Esophagus squamous epithelium (tissue), 5 donors: ENCODE measurements at regions of chr1 and their contacts with region 1.

Region 1: GRCh38 chr1:108643492-108644335 is 17.2 kb downstream of the HENMT1 start:
- DNase-seq: no peak
- H3K4me3 ChIP-seq: no peak overlapping the region
- H3K27ac ChIP-seq: no peak overlapping the region
- H3K4me1 ChIP-seq: peaks cover 7 to 24% (median 11%) of the 10 kb centered on the region in 3 donors
- H3K27me3 ChIP-seq: no peaks in the 10 kb centered on the region
- CTCF ChIP-seq: peak; percentile 21 to 74 (median 58)
- POLR2A ChIP-seq: no peak

Region 2: GRCh38 chr1:108512239-108512981 is 131.3 kb before region 1 on chr1:
- intact Hi-C with region 1: loop called (anchors 5 kb)
- DNase-seq: no peak
- H3K4me3 ChIP-seq: no peak overlapping the region
- H3K27ac ChIP-seq: no peak overlapping the region
- H3K4me1 ChIP-seq: peaks cover 0 to 12% (median 0%) of the 10 kb centered on the region in 3 donors
- H3K27me3 ChIP-seq: peaks cover 0 to 4% (median 0%) of the 10 kb centered on the region in 4 donors
- CTCF ChIP-seq: peak; percentile 48 to 87 (median 78)
- POLR2A ChIP-seq: no peak

Region 3: DNA sequence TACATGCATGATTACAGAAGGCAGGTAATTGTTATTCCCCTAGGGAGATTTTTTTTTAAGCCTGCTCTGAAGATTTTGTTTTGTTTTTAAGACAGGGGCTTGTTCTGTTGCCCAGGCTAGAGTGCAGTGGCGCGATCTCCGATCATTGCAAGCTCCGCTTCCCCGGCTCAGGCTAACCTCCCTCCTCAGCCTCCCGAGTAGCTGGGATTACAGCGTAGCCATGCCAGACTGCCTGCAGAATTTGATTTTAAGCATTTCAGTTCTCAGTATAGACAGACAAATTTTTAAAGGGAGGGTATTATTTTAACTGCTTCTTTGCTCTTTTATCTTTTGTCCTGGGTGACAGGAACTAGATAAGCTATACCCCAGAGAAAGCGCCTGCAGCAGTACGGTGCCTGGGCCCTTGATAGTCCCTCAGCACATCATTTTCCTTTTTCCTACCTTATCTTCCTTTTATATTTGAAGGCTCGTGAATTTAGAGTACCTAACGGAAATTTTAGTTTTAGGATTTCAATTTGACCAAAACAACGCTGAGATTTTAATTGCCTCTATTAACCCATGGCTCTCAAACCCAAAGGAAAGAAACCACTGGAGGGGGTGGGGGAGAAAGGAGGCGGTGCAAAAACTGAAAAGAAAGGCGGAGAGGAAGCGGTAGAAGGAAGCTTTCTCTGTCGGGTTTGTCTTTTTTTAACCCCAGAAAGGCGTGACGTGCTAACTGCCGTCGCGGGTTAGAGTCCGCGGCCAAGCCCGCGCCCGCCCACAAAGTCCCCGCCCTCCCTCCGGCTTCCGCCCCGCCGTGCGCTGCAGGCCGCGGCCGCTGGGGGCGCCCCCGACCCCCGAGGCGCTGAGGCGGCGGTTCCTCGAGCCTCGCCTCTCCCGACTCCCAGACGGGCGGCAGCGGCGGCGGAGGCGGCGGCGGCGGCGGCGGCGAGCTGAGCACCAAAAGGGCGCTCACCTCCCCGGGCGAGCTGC is 84.2 kb before region 1 on chr1 and contains the start of gene EEIG2:
- intact Hi-C with region 1: loop called (anchors 10 kb)
- DNase-seq: peak; percentile 14
- H3K4me3 ChIP-seq: peak within 1 kb of the TSS; percentile 50 to 81 (median 63)
- H3K27ac ChIP-seq: peak within 1 kb of the TSS; percentile 74 to 82 (median 80)
- H3K4me1 ChIP-seq: peaks cover 17 to 36% (median 23%) of the 10 kb centered on the region in 3 donors
- H3K27me3 ChIP-seq: peaks cover 0 to 17% (median 0%) of the 10 kb centered on the region in 4 donors
- CTCF ChIP-seq: peak; percentile 37 to 95 (median 86)
- POLR2A ChIP-seq: peak in 2 of 4 donors; percentile 29 to 55
- total RNA-seq, gene EEIG2: 3.9 to 9.7 (median 5.7) TPM